Caco-2 (cell line): ENCODE measurements at regions of chr14 and their contacts with region 1.

Region 1: DNA sequence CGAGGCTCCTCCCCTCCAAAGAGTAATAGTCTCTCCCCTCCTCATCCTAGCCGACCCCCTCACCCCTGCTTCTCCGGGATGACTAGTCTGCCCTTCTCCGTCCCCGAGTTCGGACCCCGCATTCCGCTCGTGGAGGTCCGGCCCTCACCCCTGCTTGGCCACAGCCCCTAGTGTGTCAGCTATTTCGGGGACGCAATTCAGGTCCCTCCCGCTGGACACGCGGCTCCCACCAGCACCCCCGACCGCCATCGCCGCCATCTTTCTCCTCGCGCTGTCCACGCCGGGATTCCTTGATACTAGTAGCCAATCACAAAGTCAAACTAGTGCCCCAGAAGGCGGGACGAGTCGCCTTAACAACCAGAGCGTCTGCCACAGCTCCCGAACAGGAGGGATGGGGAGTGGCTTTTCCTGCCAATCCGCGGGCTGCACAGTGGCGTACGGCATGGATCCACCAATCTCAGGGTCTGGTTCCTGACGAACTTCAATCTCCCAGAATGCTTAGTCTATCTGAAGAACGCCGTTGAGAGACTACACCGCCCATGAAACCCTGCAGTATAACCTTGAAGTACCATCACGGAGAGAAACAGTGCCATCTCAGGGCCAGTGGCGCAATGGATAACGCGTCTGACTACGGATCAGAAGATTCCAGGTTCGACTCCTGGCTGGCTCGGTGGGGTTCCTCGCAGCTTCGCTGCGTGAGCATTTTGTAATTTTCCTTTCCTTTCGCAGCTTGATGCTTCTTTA is at the start of gene PRMT5:
- DNase-seq: peak; percentile 98 to 100
- H3K4me3 ChIP-seq: peak within 1 kb of the TSS; percentile 89
- H3K4me3 Mint-ChIP-seq: no peak within 1 kb of the TSS
- H3K27ac Mint-ChIP-seq: no peak within 1 kb of the TSS
- H3K4me1 ChIP-seq: peaks cover 14% of the 10 kb centered on the region; the same call in 1 of the 2 replicates
- H3K4me1 Mint-ChIP-seq: peaks cover 26% of the 10 kb centered on the region
- H3K27me3 ChIP-seq: no peaks in the 10 kb centered on the region
- H3K27me3 Mint-ChIP-seq: no peaks in the 10 kb centered on the region
- CTCF ChIP-seq: no peak
- total RNA-seq, gene PRMT5: 107 and 111 TPM in 2 replicates

Region 2: DNA sequence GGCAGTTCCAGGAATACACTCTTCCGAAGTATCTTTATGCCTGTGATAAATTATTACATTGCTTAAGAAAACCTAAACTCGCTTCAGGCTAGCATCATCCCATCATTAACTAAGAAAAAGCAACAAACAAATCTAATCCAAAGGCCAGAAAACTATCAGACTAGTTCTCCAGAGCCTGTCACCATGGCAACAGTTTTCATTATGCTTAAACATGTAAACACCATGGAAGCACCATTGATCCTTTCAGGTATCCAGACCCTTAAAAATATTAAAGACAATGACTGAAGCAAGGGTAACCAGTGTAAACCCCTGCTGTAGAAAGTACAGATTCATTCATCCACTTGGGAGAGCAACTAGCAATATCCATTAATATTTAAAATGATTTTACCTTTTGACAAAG is 350.0 kb before region 1 on chr14:
- CTCF ChIA-PET with region 1: interaction called, 10 read pairs
- POLR2A ChIA-PET with region 1: no interaction called
- intact Hi-C with region 1: no loop called
- DNase-seq: no peak
- H3K4me3 ChIP-seq: no peak overlapping the region
- H3K4me3 Mint-ChIP-seq: no peak overlapping the region
- H3K27ac Mint-ChIP-seq: no peak overlapping the region
- H3K4me1 ChIP-seq: no peaks in the 10 kb centered on the region
- H3K4me1 Mint-ChIP-seq: peaks cover 30% of the 10 kb centered on the region
- H3K27me3 ChIP-seq: no peaks in the 10 kb centered on the region
- H3K27me3 Mint-ChIP-seq: no peaks in the 10 kb centered on the region
- CTCF ChIP-seq: no peak

Region 3: GRCh38 chr14:22918804-22919600 is 10.3 kb before region 1 on chr14 and contains the start of gene RBM23:
- CTCF ChIA-PET with region 1: interaction called, 6 read pairs
- POLR2A ChIA-PET with region 1: no interaction called
- intact Hi-C with region 1: loop called (anchors 1 kb)
- DNase-seq: peak; percentile 98
- H3K4me3 ChIP-seq: peak within 1 kb of the TSS; percentile 65
- H3K4me3 Mint-ChIP-seq: peak within 1 kb of the TSS; percentile 90
- H3K27ac Mint-ChIP-seq: peak within 1 kb of the TSS; percentile 100
- H3K4me1 ChIP-seq: peaks cover 8% of the 10 kb centered on the region
- H3K4me1 Mint-ChIP-seq: peaks cover 6% of the 10 kb centered on the region
- H3K27me3 ChIP-seq: no peaks in the 10 kb centered on the region
- H3K27me3 Mint-ChIP-seq: peaks cover 2% of the 10 kb centered on the region
- CTCF ChIP-seq: no peak
- total RNA-seq, gene RBM23: 67.0 and 70.0 TPM in 2 replicates

Region 4: DNA sequence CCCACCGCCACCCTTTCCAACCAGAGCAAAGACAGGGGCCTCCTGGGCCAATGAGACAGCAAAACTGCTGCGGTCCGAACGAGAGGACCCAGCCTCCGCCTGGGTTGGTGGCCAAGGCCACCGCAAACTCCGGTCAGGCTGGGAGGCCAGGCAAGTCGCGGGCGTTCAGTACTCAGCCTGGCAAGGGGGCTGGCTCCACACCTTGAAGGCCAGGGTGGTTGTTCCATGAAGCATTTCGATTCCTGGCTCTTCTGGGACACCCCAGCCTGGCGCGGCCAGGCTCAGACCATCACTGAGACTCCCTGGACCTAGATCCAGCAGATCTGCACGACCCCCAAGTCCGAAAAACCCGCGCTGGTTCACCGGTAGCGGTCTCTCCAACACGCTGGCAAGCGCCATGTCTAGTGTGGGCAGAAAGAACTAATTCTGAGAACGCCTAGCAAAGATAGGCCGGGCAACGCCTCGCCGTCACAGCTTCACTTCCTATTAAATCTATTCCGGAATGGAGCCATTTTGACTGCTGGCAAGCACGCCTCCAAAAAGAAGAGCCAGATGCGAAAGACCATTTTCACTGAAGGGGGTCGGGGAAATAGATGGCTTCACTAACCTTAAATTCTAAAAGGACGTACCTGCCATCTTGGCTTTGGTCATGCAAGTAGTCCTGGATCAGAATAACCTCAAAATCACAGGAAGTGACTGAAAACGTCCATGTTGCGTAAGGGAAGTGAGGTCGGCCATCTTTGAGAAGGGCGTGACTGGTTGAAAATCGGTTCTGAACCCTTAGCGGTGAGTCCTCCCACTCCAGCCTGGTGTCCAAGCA is 105.4 kb after region 1 on chr14 and contains the start of gene PSMB5:
- CTCF ChIA-PET with region 1: no interaction called
- POLR2A ChIA-PET with region 1: no interaction called
- intact Hi-C with region 1: no loop called
- DNase-seq: peak; percentile 89 to 95
- H3K4me3 ChIP-seq: peak within 1 kb of the TSS; percentile 72
- H3K4me3 Mint-ChIP-seq: peak within 1 kb of the TSS; percentile 98
- H3K27ac Mint-ChIP-seq: peak within 1 kb of the TSS; percentile 99
- H3K4me1 ChIP-seq: peaks cover 6% of the 10 kb centered on the region
- H3K4me1 Mint-ChIP-seq: peaks cover 7% of the 10 kb centered on the region
- H3K27me3 ChIP-seq: no peaks in the 10 kb centered on the region
- H3K27me3 Mint-ChIP-seq: no peaks in the 10 kb centered on the region
- CTCF ChIP-seq: no peak
- total RNA-seq, gene PSMB5: 172 and 189 TPM in 2 replicates

Region 5: GRCh38 chr14:23766737-23767401 is 837.6 kb after region 1 on chr14:
- CTCF ChIA-PET with region 1: no interaction called
- POLR2A ChIA-PET with region 1: no interaction called
- intact Hi-C with region 1: no loop called
- DNase-seq: no peak
- H3K4me3 ChIP-seq: no peak overlapping the region
- H3K4me3 Mint-ChIP-seq: no peak overlapping the region
- H3K27ac Mint-ChIP-seq: no peak overlapping the region
- H3K4me1 ChIP-seq: no peaks in the 10 kb centered on the region
- H3K4me1 Mint-ChIP-seq: no peaks in the 10 kb centered on the region
- H3K27me3 ChIP-seq: no peaks in the 10 kb centered on the region
- H3K27me3 Mint-ChIP-seq: peaks cover 10% of the 10 kb centered on the region
- CTCF ChIP-seq: no peak